ENCODE measurements at regions of chr11 and their contacts with region 1.

Region 1: GRCh38 chr11:64120951-64121569 is 44.9 kb downstream of the MACROD1 start:
- DNase-seq: no peak
- H3K4me3 ChIP-seq: no peak overlapping the region
- H3K27ac ChIP-seq: no peak overlapping the region
- H3K4me1 ChIP-seq: peaks cover 0 to 24% (median 17%) of the 10 kb centered on the region in 4 experiments; a peak in 6 of 7 replicates
- H3K27me3 ChIP-seq: peaks cover 0 to 13% (median 5%) of the 10 kb centered on the region in 4 experiments; a peak in 5 of 7 replicates
- CTCF ChIP-seq: no peak
- EP300 ChIP-seq: no peak
- POLR2A ChIP-seq: no peak
- RAD21 ChIP-seq: no peak

Region 2: GRCh38 chr11:64088162-64089026 is 32.7 kb before region 1 on chr11:
- CTCF ChIA-PET with region 1: interaction called, 14 read pairs
- POLR2A ChIA-PET with region 1: no interaction called
- DNase-seq: peak; percentile 38 to 72
- H3K4me3 ChIP-seq: no peak overlapping the region
- H3K27ac ChIP-seq: no peak overlapping the region
- H3K4me1 ChIP-seq: peaks cover 0 to 8% (median 5%) of the 10 kb centered on the region in 4 experiments; a peak in 6 of 7 replicates
- H3K27me3 ChIP-seq: peaks cover 2 to 60% (median 31%) of the 10 kb centered on the region in 4 experiments
- CTCF ChIP-seq: peak in 2 of 3 experiments; percentile 82 to 85; a peak in 3 of 4 replicates
- EP300 ChIP-seq: no peak
- POLR2A ChIP-seq: no peak
- RAD21 ChIP-seq: peak; percentile 63 to 70

Region 3: GRCh38 chr11:64110465-64111375 is 10.3 kb before region 1 on chr11:
- CTCF ChIA-PET with region 1: interaction called, 10 read pairs
- POLR2A ChIA-PET with region 1: interaction called, 4 read pairs
- DNase-seq: no peak
- H3K4me3 ChIP-seq: no peak overlapping the region
- H3K27ac ChIP-seq: no peak overlapping the region
- H3K4me1 ChIP-seq: peaks cover 0 to 3% (median 0%) of the 10 kb centered on the region in 4 experiments; a peak in 2 of 7 replicates
- H3K27me3 ChIP-seq: peaks cover 0 to 28% (median 22%) of the 10 kb centered on the region in 4 experiments; a peak in 5 of 7 replicates
- CTCF ChIP-seq: no peak
- EP300 ChIP-seq: no peak
- POLR2A ChIP-seq: no peak
- RAD21 ChIP-seq: no peak

Region 4: GRCh38 chr11:64131683-64132190 is 10.7 kb after region 1 on chr11:
- CTCF ChIA-PET with region 1: interaction called, 16 read pairs
- POLR2A ChIA-PET with region 1: interaction called, 16 read pairs
- DNase-seq: no peak
- H3K4me3 ChIP-seq: no peak overlapping the region
- H3K27ac ChIP-seq: no peak overlapping the region
- H3K4me1 ChIP-seq: peaks cover 0 to 14% (median 9%) of the 10 kb centered on the region in 4 experiments; a peak in 5 of 7 replicates
- H3K27me3 ChIP-seq: peaks cover 0 to 35% (median 16%) of the 10 kb centered on the region in 4 experiments; a peak in 5 of 7 replicates
- CTCF ChIP-seq: no peak
- EP300 ChIP-seq: no peak
- POLR2A ChIP-seq: no peak
- RAD21 ChIP-seq: no peak

Region 5: DNA sequence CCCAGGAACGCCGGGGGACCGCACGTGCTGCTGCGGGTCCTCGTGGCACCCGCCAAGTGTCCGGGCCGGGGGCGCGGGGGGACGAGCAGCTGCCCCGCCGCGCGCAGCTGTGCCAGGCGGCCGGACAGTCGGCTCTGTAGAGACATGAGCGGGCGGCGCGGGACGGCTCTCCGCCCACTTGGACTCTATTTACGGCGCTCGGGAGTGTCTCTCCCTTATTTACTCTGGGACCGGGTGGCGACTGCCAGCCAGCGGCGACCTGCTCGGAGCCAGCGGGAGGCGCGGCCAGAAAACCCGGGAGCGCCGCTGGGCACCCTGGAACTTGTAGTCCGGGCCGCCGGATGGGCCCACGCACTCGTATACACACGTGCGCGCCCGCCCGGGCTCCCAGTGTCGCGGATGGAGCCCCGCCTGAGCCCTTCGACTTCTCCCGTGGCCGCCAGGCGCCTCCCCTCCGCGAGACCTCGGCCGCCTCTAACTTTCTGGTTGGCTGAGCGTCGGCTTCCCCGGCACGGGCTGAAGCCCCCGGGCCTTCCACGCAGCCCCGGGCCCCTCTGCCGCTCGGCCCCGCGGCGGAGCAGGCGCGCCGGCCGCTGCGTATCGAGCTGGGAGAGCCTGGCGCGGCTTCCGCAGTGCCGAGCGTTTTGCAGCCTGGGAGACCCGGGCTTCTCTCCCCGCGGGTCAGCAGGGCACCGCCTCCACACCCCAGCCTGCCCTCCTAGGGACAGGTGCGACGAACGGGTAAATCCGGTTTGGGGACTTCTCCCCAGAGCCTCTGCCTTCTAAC is 45.0 kb after region 1 on chr11 and contains the start of gene MACROD1:
- CTCF ChIA-PET with region 1: no interaction called
- POLR2A ChIA-PET with region 1: no interaction called
- DNase-seq: peak in 1 of 2 experiments; percentile 84
- H3K4me3 ChIP-seq: peak within 1 kb of the TSS; percentile 52 to 77 (median 64)
- H3K27ac ChIP-seq: no peak within 1 kb of the TSS
- H3K4me1 ChIP-seq: peaks cover 0 to 11% (median 9%) of the 10 kb centered on the region in 4 experiments; a peak in 6 of 7 replicates
- H3K27me3 ChIP-seq: peaks cover 0 to 3% (median 0%) of the 10 kb centered on the region in 4 experiments; a peak in 2 of 7 replicates
- CTCF ChIP-seq: no peak
- EP300 ChIP-seq: peak in 1 of 2 experiments; percentile 60; a peak in 1 of 3 replicates
- POLR2A ChIP-seq: peak in 1 of 2 experiments; percentile 52; a peak in 1 of 3 replicates
- RAD21 ChIP-seq: peak in 1 of 2 experiments; percentile 9; a peak in 1 of 4 replicates
- total RNA-seq, gene MACROD1: 19.5 and 19.6 TPM in 2 replicates

Region 6: GRCh38 chr11:64216879-64217278 is 95.8 kb after region 1 on chr11:
- CTCF ChIA-PET with region 1: no interaction called
- POLR2A ChIA-PET with region 1: no interaction called
- DNase-seq: no peak
- H3K4me3 ChIP-seq: no peak overlapping the region
- H3K27ac ChIP-seq: no peak overlapping the region
- H3K4me1 ChIP-seq: no peaks in the 10 kb centered on the region
- H3K27me3 ChIP-seq: no peaks in the 10 kb centered on the region
- CTCF ChIP-seq: peak in 2 of 3 experiments; percentile 8 to 10; a peak in 2 of 4 replicates
- EP300 ChIP-seq: no peak
- POLR2A ChIP-seq: no peak
- RAD21 ChIP-seq: no peak

Measured in H1 (cell line).